HepG2 (cell line): ENCODE measurements at regions of chr11 and their contacts with region 1.

Region 1: GRCh38 chr11:66677599-66678375 is at the start of gene RBM4B:
- DNase-seq: peak; percentile 93
- ATAC-seq: peak; percentile 96
- H3K4me3 ChIP-seq: peak within 1 kb of the TSS; percentile 60 to 83 (median 82)
- H3K27ac ChIP-seq: peak within 1 kb of the TSS; percentile 87
- H3K4me1 ChIP-seq: peaks cover 40% of the 10 kb centered on the region
- H3K27me3 ChIP-seq: no peaks in the 10 kb centered on the region; a peak in 1 of 5 replicates
- CTCF ChIP-seq: no peak
- EP300 ChIP-seq: 0 out of 4 replicates have a peak, but pooled peaks of 1 of the 2 experiments have one; percentile 7
- POLR2A ChIP-seq: peak; percentile 80 to 95
- RAD21 ChIP-seq: no peak
- total RNA-seq, gene RBM4B: 25.6 and 25.8 TPM in 2 replicates

Region 2: DNA sequence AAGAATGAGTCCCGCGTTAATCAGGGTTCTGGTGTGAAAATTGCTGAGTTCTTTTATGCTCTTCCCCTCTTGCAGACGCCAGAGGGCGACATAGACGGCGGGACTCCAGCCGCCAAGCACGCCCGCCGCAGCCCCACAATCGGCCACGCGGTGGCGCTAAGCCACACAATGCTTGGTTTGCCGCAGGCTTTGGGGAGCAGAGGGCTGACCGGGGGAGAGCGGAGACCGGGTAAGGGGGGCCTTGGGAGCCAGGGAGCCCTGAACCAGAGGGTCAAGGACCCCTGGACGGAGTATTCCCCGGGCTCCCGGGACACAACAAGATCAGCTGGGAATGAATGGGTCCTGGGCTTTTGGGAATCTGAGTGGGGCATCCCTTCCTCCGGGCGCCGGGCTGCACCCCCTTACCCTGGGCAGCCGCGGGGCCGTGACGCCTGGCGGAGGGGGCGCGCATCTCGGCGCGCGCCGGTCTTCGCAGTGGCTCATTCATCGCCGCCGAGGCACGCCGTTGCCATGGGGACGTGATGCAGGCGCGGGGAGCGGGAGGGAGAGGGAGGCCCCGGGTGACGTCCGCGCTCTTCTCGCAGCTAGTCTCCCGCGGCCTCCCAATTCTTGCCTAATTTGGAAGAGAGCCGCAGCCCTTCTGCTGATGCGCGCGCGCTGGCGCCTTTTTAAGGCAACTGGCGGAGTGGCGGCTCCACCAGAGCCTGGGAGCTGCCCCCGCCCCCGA is 269.1 kb before region 1 on chr11:
- CTCF ChIA-PET with region 1: interaction called, 28 read pairs
- POLR2A ChIA-PET with region 1: no interaction called
- in situ Hi-C with region 1: no loop called
- intact Hi-C with region 1: loop called (anchors 1 kb)
- DNase-seq: peak; percentile 68
- ATAC-seq: peak; percentile 76
- H3K4me3 ChIP-seq: peak overlapping the region in 1 of 3 experiments; percentile 37; a peak in 1 of 6 replicates
- H3K27ac ChIP-seq: no peak overlapping the region
- H3K4me1 ChIP-seq: 0 out of 2 replicates have a peak, but pooled peaks cover 5% of the 10 kb centered on the region
- H3K27me3 ChIP-seq: peaks cover 5 to 83% of the 10 kb centered on the region in 2 experiments
- CTCF ChIP-seq: peak; percentile 99
- EP300 ChIP-seq: no peak
- POLR2A ChIP-seq: no peak
- RAD21 ChIP-seq: peak; percentile 98

Region 3: GRCh38 chr11:66466225-66467027 is 211.4 kb before region 1 on chr11 and contains the start of gene PELI3:
- CTCF ChIA-PET with region 1: no interaction called
- POLR2A ChIA-PET with region 1: interaction called, 14 read pairs
- in situ Hi-C with region 1: no loop called
- intact Hi-C with region 1: no loop called
- DNase-seq: peak; percentile 72
- ATAC-seq: peak; percentile 86
- H3K4me3 ChIP-seq: peak within 1 kb of the TSS; percentile 77 to 87 (median 84)
- H3K27ac ChIP-seq: no peak within 1 kb of the TSS
- H3K4me1 ChIP-seq: peaks cover 26% of the 10 kb centered on the region
- H3K27me3 ChIP-seq: peaks cover 0 to 12% of the 10 kb centered on the region in 2 experiments; a peak in 3 of 5 replicates
- CTCF ChIP-seq: no peak
- EP300 ChIP-seq: no peak
- POLR2A ChIP-seq: peak in 1 of 2 experiments; percentile 56; a peak in 2 of 4 replicates
- RAD21 ChIP-seq: no peak
- total RNA-seq, gene PELI3: 2.5 and 4.0 TPM in 2 replicates

Region 4: GRCh38 chr11:66545701-66546367 is 132.0 kb before region 1 on chr11 and contains the start of gene ZDHHC24:
- CTCF ChIA-PET with region 1: no interaction called
- POLR2A ChIA-PET with region 1: interaction called, 17 read pairs
- in situ Hi-C with region 1: no loop called
- intact Hi-C with region 1: no loop called
- DNase-seq: peak; percentile 92
- ATAC-seq: peak; percentile 92
- H3K4me3 ChIP-seq: peak within 1 kb of the TSS; percentile 69 to 93 (median 83)
- H3K27ac ChIP-seq: peak within 1 kb of the TSS; percentile 53
- H3K4me1 ChIP-seq: peaks cover 39% of the 10 kb centered on the region
- H3K27me3 ChIP-seq: peaks cover 0 to 7% of the 10 kb centered on the region in 2 experiments; a peak in 4 of 5 replicates
- CTCF ChIP-seq: 0 out of 2 replicates have a peak, but pooled peaks have one; percentile 28
- EP300 ChIP-seq: no peak
- POLR2A ChIP-seq: peak; percentile 70 to 73
- RAD21 ChIP-seq: peak; percentile 32; the same call in 1 of the 2 replicates
- total RNA-seq, gene ZDHHC24: 1.9 and 4.3 TPM in 2 replicates

Region 5: GRCh38 chr11:66592457-66593302 is 85.1 kb before region 1 on chr11 and contains the starts of genes CCDC87 and CCS:
- CTCF ChIA-PET with region 1: no interaction called
- POLR2A ChIA-PET with region 1: interaction called, 35 read pairs
- in situ Hi-C with region 1: no loop called
- intact Hi-C with region 1: loop called (anchors 5 kb)
- DNase-seq: peak; percentile 93
- ATAC-seq: peak; percentile 89
- H3K4me3 ChIP-seq: peak within 1 kb of the TSS; percentile 71 to 94 (median 76)
- H3K27ac ChIP-seq: peak within 1 kb of the TSS; percentile 78
- H3K4me1 ChIP-seq: peaks cover 72% of the 10 kb centered on the region
- H3K27me3 ChIP-seq: no peaks in the 10 kb centered on the region; a peak in 1 of 5 replicates
- CTCF ChIP-seq: peak; percentile 85
- EP300 ChIP-seq: no peak
- POLR2A ChIP-seq: peak; percentile 89 to 99
- RAD21 ChIP-seq: peak; percentile 91
- total RNA-seq, gene CCDC87: 0.17 and 0.42 TPM in 2 replicates
- total RNA-seq, gene CCS: 34.2 and 44.6 TPM in 2 replicates

Region 6: GRCh38 chr11:66616379-66617154 is 61.2 kb before region 1 on chr11 and contains the start of gene RBM14:
- CTCF ChIA-PET with region 1: no interaction called
- POLR2A ChIA-PET with region 1: interaction called, 22 read pairs
- in situ Hi-C with region 1: no loop called
- intact Hi-C with region 1: no loop called
- DNase-seq: peak; percentile 99
- ATAC-seq: peak; percentile 96
- H3K4me3 ChIP-seq: peak within 1 kb of the TSS; percentile 89 to 93 (median 92)
- H3K27ac ChIP-seq: peak within 1 kb of the TSS; percentile 89
- H3K4me1 ChIP-seq: peaks cover 44% of the 10 kb centered on the region
- H3K27me3 ChIP-seq: no peaks in the 10 kb centered on the region; a peak in 1 of 5 replicates
- CTCF ChIP-seq: no peak; the same call in none of the 2 replicates
- EP300 ChIP-seq: peak in 1 of 2 experiments; percentile 30; a peak in 1 of 4 replicates
- POLR2A ChIP-seq: peak; percentile 99
- RAD21 ChIP-seq: 0 out of 2 replicates have a peak, but pooled peaks have one; percentile 15
- total RNA-seq, gene RBM14: 41.7 and 44.1 TPM in 2 replicates

Region 7: DNA sequence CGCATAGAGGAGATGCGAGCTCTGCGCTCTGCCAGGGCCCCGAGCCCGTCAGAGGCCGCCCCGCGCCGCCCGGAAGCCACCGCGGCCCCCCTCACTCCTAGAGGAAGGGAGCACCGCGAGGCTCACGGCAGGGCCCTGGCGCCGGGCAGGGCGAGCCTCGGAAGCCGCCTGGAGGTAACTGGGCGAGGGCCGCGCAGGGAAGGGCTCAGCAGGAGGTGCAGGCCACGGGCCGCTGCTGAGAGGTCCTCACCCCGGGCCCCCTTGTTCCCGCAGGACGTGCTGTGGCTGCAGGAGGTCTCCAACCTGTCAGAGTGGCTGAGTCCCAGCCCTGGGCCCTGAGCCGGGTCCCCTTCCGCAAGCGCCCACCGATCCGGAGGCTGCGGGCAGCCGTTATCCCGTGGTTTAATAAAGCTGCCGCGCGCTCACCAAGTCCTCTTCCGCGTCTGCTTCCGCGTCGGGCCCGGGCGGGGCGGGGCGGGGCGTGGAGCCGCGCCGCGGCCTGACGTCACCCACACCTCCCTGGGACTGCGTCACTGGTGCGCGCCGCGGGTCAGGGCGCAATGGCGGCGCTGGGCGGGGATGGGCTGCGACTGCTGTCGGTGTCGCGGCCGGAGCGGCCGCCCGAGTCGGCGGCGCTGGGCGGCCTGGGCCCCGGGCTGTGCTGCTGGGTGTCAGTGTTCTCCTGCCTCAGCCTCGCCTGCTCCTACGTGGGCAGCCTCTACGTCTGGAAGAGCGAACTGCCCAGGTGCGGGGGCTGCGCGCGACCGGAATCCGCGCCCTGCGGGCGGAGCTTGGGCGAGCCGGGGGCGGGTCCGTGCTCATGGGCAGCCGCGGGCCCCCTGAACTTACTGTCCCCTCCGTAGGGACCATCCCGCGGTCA is 165.3 kb after region 1 on chr11 and contains the start of gene RCE1:
- CTCF ChIA-PET with region 1: no interaction called
- POLR2A ChIA-PET with region 1: interaction called, 11 read pairs
- in situ Hi-C with region 1: no loop called
- intact Hi-C with region 1: no loop called
- DNase-seq: peak; percentile 71
- ATAC-seq: peak; percentile 78
- H3K4me3 ChIP-seq: peak within 1 kb of the TSS; percentile 87 to 99 (median 87)
- H3K27ac ChIP-seq: peak within 1 kb of the TSS; percentile 82
- H3K4me1 ChIP-seq: peaks cover 28% of the 10 kb centered on the region
- H3K27me3 ChIP-seq: no peaks in the 10 kb centered on the region; a peak in 1 of 5 replicates
- CTCF ChIP-seq: no peak
- EP300 ChIP-seq: peak; percentile 21 to 47; a peak in 1 of 4 replicates
- POLR2A ChIP-seq: peak; percentile 87 to 92
- RAD21 ChIP-seq: peak; percentile 40; the same call in 1 of the 2 replicates
- total RNA-seq, gene RCE1: 8.0 and 22.2 TPM in 2 replicates